ENCODE measurements at regions of chr16 and their contacts with region 1.

Region 1: GRCh38 chr16:50245417-50246298 is 20.7 kb upstream of the ADCY7 start:
- DNase-seq: peak; percentile 82
- H3K4me3 Mint-ChIP-seq: peak overlapping the region; percentile 83
- H3K27ac Mint-ChIP-seq: peak overlapping the region; percentile 82
- H3K4me1 Mint-ChIP-seq: peaks cover 49% of the 10 kb centered on the region
- H3K27me3 Mint-ChIP-seq: peaks cover 7% of the 10 kb centered on the region

Region 2: GRCh38 chr16:50266337-50267091 is 20.9 kb after region 1 on chr16 and contains the start of gene ADCY7:
- CTCF ChIA-PET with region 1: interaction called, 5 read pairs
- POLR2A ChIA-PET with region 1: interaction called, 686 read pairs
- DNase-seq: peak; percentile 89
- H3K4me3 Mint-ChIP-seq: peak within 1 kb of the TSS; percentile 89
- H3K27ac Mint-ChIP-seq: peak within 1 kb of the TSS; percentile 91
- H3K4me1 Mint-ChIP-seq: peaks cover 82% of the 10 kb centered on the region
- H3K27me3 Mint-ChIP-seq: no peaks in the 10 kb centered on the region
- total RNA-seq, gene ADCY7: 266 to 270 TPM

Region 3: GRCh38 chr16:50273681-50274325 is 28.1 kb after region 1 on chr16:
- CTCF ChIA-PET with region 1: interaction called, 10 read pairs
- POLR2A ChIA-PET with region 1: interaction called, 686 read pairs
- DNase-seq: peak; percentile 60
- H3K4me3 Mint-ChIP-seq: peak overlapping the region; percentile 88
- H3K27ac Mint-ChIP-seq: peak overlapping the region; percentile 98
- H3K4me1 Mint-ChIP-seq: peaks cover 98% of the 10 kb centered on the region
- H3K27me3 Mint-ChIP-seq: no peaks in the 10 kb centered on the region

Region 4: DNA sequence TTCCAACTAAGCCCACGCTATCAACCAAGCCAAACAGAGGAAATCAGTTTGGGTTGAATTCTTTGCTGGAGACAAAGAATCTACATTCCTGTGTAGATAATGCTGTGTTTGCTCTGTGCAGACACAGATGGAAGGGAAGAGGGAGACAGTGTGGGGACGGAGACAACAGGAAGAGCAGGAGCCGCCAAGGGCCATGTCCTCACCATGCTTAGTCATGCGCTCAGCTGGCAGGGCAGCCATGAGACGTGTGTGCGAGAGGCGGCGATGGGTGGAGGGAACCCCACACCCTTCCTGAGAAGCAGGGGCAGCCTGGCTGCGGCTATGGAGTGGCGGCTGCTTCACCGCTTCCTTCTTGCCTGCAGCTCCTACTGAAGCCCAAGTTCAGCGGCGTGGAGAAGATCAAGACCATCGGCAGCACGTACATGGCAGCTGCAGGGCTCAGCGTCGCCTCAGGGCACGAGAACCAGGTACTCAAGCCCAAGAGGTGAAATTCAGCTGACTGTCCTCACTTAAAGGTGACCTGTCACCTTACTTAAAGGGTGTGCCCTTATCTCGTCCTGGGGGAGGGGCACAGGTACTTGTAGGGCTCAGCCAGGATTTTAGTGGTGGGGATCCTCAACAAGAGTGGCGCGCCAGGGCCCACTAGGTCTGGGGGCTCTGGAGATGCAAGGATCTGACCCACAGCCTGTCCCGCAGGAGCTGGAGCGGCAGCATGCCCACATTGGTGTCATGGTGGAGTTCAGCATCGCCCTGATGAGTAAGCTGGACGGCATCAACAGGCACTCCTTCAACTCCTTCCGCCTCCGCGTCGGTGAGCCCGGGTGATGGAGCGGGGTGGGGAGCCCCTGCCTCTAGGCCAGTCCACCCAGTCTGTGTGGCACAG is 68.2 kb after region 1 on chr16:
- CTCF ChIA-PET with region 1: interaction called, 4 read pairs
- POLR2A ChIA-PET with region 1: interaction called, 16 read pairs
- DNase-seq: peak; percentile 79
- H3K4me3 Mint-ChIP-seq: peak overlapping the region; percentile 22
- H3K27ac Mint-ChIP-seq: peak overlapping the region; percentile 77
- H3K4me1 Mint-ChIP-seq: peaks cover 54% of the 10 kb centered on the region
- H3K27me3 Mint-ChIP-seq: no peaks in the 10 kb centered on the region

Region 5: GRCh38 chr16:50354629-50355456 is 109.2 kb after region 1 on chr16:
- CTCF ChIA-PET with region 1: interaction called, 12 read pairs
- POLR2A ChIA-PET with region 1: interaction called, 3 read pairs
- DNase-seq: no peak
- H3K4me3 Mint-ChIP-seq: no peak overlapping the region
- H3K27ac Mint-ChIP-seq: no peak overlapping the region
- H3K4me1 Mint-ChIP-seq: peaks cover 30% of the 10 kb centered on the region
- H3K27me3 Mint-ChIP-seq: no peaks in the 10 kb centered on the region